ENCODE measurements at regions of chr7 and their contacts with region 1.

Region 1: GRCh38 chr7:139230774-139231512 is at the start of gene UBN2:
- DNase-seq: peak; percentile 97
- H3K4me3 ChIP-seq: peak within 1 kb of the TSS; percentile 98
- H3K27ac ChIP-seq: peak within 1 kb of the TSS; percentile 41
- H3K4me1 ChIP-seq: peaks cover 37% of the 10 kb centered on the region
- H3K27me3 ChIP-seq: no peaks in the 10 kb centered on the region
- CTCF ChIP-seq: no peak
- total RNA-seq, gene UBN2: 20.3 and 34.1 TPM in 2 replicates

Region 2: DNA sequence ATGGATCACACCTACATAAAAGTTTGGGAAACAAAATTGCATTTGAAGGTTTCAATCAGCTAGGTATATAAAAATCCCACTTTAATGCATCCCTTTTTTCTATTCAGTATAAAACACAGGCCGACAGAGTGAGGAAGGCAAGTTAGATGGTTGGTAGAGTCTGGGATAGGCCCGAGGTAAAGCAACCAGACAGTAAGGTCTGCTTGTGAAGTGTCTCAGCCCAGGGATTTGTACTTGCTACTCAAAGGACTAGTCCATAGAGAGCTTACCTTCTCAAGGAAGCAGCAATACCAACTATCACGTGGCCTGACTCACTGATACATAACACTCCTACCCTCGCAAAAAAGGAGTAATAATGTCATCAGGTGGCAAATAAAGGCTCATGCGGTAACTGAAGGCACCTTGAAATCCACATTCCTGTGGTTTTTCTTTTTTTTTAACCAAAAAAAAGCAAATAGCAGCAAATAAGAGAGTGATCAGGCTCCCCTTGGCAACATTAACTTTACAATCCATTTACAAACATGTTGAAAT is 376.8 kb before region 1 on chr7:
- CTCF ChIA-PET with region 1: no interaction called
- POLR2A ChIA-PET with region 1: no interaction called
- intact Hi-C with region 1: no loop called
- DNase-seq: peak in 1 of 2 experiments; percentile 92
- H3K4me3 ChIP-seq: no peak overlapping the region
- H3K27ac ChIP-seq: peak overlapping the region; percentile 54
- H3K4me1 ChIP-seq: peaks cover 32% of the 10 kb centered on the region
- H3K27me3 ChIP-seq: no peaks in the 10 kb centered on the region
- CTCF ChIP-seq: no peak

Region 3: DNA sequence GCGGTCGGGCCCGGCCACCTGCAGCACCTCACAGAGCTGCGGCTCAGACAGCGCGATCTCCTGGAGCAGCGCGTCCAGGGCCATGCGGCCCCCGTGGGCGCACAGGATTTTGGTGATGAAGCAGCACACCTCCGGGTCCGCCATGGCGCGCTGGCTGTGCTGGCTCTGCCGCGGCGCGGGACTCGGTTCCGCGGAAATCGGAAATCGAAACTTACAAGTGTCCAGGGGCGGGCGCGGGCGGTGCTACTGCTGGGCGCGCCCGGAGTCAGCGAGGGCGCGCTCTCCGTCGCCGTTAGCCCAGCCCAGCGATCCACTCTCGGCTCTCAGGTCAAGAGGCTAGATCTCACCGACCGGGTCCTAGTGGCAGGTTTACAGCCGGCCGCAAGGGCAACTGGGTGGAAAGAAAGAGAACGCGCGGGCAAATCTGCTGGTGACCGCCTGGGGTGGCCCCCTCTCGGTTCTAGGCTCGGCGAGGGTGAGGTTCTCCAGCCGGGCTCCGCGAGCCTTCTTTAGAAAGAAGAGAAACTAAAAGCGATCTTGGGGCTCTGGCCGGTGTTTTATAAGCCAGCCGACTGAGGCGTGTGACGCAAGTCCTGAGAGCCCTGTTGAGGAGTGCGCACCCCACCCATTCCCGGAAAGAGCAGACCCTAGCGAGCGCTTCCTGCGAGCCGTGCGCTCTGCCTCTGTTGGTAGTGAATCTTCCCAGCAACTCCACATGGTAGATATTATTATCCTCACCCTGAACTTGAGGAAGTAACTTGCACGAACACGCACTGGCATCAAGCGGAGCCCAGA is 121.6 kb before region 1 on chr7 and contains the start of gene ZC3HAV1:
- CTCF ChIA-PET with region 1: interaction called, 3 read pairs
- POLR2A ChIA-PET with region 1: no interaction called
- intact Hi-C with region 1: loop called (anchors 1 kb)
- DNase-seq: peak; percentile 76 to 88
- H3K4me3 ChIP-seq: peak within 1 kb of the TSS; percentile 93
- H3K27ac ChIP-seq: peak within 1 kb of the TSS; percentile 75
- H3K4me1 ChIP-seq: peaks cover 21% of the 10 kb centered on the region
- H3K27me3 ChIP-seq: no peaks in the 10 kb centered on the region
- CTCF ChIP-seq: no peak
- total RNA-seq, gene ZC3HAV1: 30.8 and 36.7 TPM in 2 replicates

Region 4: GRCh38 chr7:139133335-139134139 is 97.4 kb before region 1 on chr7:
- CTCF ChIA-PET with region 1: no interaction called
- POLR2A ChIA-PET with region 1: interaction called, 5 read pairs
- intact Hi-C with region 1: loop called (anchors 5 kb)
- DNase-seq: peak; percentile 76 to 85
- H3K4me3 ChIP-seq: peak overlapping the region; percentile 69
- H3K27ac ChIP-seq: no peak overlapping the region
- H3K4me1 ChIP-seq: peaks cover 10% of the 10 kb centered on the region; the same call in 1 of the 2 replicates
- H3K27me3 ChIP-seq: peaks cover 3% of the 10 kb centered on the region; the same call in 1 of the 2 replicates
- CTCF ChIP-seq: no peak

Region 5: DNA sequence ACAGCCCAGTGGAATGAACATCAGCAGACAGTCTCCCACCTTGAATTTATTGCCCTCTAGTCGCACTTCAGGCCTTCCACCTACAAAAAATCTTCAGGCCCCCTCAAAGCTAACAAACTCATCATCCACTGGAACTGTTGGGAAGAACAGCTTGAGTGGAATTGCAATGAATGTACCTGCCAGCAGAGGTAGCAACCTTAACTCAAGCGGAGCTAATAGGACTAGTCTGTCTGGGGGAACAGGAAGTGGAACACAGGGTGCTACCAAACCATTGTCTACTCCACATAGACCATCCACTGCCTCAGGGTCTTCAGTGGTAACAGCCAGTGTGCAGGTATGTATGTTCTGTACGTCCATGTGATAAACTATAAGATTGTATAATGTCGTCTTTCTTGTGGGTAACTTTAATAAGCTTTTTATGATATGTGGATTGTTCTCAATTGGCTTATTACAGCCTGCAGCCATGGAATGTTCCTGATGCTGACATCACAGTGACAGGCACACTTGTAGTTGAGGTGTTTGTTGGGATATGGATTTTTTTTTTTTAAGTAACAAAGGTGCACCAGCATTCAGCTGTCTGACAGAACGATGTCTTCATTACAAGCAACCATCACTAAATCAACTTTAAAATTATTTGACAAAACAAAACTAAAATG is 53.4 kb after region 1 on chr7:
- CTCF ChIA-PET with region 1: no interaction called
- POLR2A ChIA-PET with region 1: no interaction called
- intact Hi-C with region 1: no loop called
- DNase-seq: no peak
- H3K4me3 ChIP-seq: no peak overlapping the region
- H3K27ac ChIP-seq: no peak overlapping the region
- H3K4me1 ChIP-seq: no peaks in the 10 kb centered on the region
- H3K27me3 ChIP-seq: no peaks in the 10 kb centered on the region
- CTCF ChIP-seq: no peak

Region 6: GRCh38 chr7:140881507-140882228 is 1650.7 kb after region 1 on chr7:
- CTCF ChIA-PET with region 1: no interaction called
- POLR2A ChIA-PET with region 1: no interaction called
- intact Hi-C with region 1: loop called (anchors 10 kb)
- DNase-seq: no peak
- H3K4me3 ChIP-seq: no peak overlapping the region
- H3K27ac ChIP-seq: no peak overlapping the region
- H3K4me1 ChIP-seq: peaks cover 9% of the 10 kb centered on the region
- H3K27me3 ChIP-seq: no peaks in the 10 kb centered on the region
- CTCF ChIP-seq: no peak

Measured in PC-9 (cell line).